HEK293T (cell line): ENCODE measurements at regions of chr12 and their contacts with region 1.

Region 1: GRCh38 chr12:30985814-30986452 is 59.4 kb downstream of the TSPAN11 start:
- DNase-seq: peak; percentile 72

Region 2: GRCh38 chr12:30746190-30746589 is 239.7 kb before region 1 on chr12:
- CTCF ChIA-PET with region 1: no interaction called
- POLR2A ChIA-PET with region 1: no interaction called
- DNase-seq: no peak

Region 3: DNA sequence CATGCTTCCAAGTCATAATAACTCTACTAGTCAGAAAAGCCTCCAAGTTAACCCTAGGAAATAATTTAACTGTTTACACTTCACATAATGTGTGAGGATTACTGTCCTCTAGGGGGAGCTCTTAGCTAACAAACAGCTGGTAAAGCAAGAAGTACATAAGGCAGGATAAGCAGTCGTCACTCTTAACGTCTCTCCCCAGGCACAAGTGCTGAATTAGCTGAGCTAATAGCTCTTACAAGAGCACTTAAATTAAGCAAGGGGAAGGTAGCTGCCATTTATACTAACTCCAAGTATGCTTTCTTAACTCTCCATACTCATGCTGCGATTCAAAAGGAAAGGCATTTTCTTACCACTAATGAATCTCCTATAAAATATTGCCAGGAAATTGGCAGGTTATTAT is 138.7 kb before region 1 on chr12:
- CTCF ChIA-PET with region 1: interaction called, 15 read pairs
- POLR2A ChIA-PET with region 1: no interaction called
- DNase-seq: no peak